Left cardiac atrium (tissue), 4 donors: ENCODE measurements at regions of chr14 and their contacts with region 1.

Region 1: GRCh38 chr14:44961604-44962333 is at the starts of genes KLHL28 and TOGARAM1:
- DNase-seq: peak; percentile 97
- ATAC-seq: peak; percentile 96
- total RNA-seq, gene KLHL28: 10.5 to 10.9 TPM
- total RNA-seq, gene TOGARAM1: 14.8 to 18.6 TPM

Region 2: GRCh38 chr14:44463386-44464004 is 498.3 kb before region 1 on chr14:
- intact Hi-C with region 1: no loop called
- DNase-seq: no peak
- ATAC-seq: peak in 1 of 2 donors; percentile 90

Region 3: GRCh38 chr14:45083971-45084722 is 122.4 kb after region 1 on chr14 and contains the start of gene PRPF39:
- intact Hi-C with region 1: loop called in 1 of 2 experiments (anchors 10 kb)
- DNase-seq: peak; percentile 96
- ATAC-seq: peak; percentile 99
- total RNA-seq, gene PRPF39: 12.8 to 19.5 TPM